CD8-positive, alpha-beta memory T cell (primary cell): ENCODE measurements at regions of chr1 and their contacts with region 1.

Region 1: GRCh38 chr1:39609618-39610331 is 29.7 kb downstream of the HEYL start:
- DNase-seq: peak; percentile 40 to 75 (median 52)
- H3K4me3 ChIP-seq: no peak overlapping the region
- H3K4me3 Mint-ChIP-seq: peak overlapping the region in 1 of 7 donors; percentile 11
- H3K27ac ChIP-seq: no peak overlapping the region
- H3K27ac Mint-ChIP-seq: peak overlapping the region in 1 of 8 donors; percentile 22
- H3K4me1 ChIP-seq: no peaks in the 10 kb centered on the region
- H3K4me1 Mint-ChIP-seq: peaks cover 7 to 16% (median 11%) of the 10 kb centered on the region in 3 donors
- H3K27me3 ChIP-seq: no peaks in the 10 kb centered on the region
- H3K27me3 Mint-ChIP-seq: peaks cover 12 to 17% of the 10 kb centered on the region in 2 donors

Region 2: DNA sequence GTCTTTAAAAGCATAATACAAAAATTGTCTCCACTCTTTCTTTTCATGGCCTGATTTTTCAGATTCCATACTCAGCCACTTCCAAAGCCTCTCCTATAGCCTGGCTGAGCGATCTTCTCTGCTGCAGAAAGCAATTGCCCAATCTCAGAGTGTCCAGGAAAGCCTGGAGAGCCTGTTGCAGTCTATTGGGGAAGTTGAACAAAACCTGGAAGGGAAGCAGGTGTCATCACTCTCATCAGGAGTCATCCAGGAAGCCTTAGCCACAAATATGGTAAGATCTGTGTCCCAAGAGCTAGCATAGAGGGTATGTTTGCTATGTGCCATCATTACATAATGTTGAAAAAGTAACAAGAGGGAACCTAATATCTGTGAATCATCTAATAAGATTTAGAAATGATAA is 249.0 kb before region 1 on chr1:
- CTCF ChIA-PET with region 1: no interaction called
- POLR2A ChIA-PET with region 1: no interaction called
- DNase-seq: no peak
- H3K4me3 ChIP-seq: no peak overlapping the region
- H3K4me3 Mint-ChIP-seq: no peak overlapping the region
- H3K27ac ChIP-seq: no peak overlapping the region
- H3K27ac Mint-ChIP-seq: peak overlapping the region in 5 of 8 donors; percentile 1 to 72 (median 42)
- H3K4me1 ChIP-seq: no peaks in the 10 kb centered on the region
- H3K4me1 Mint-ChIP-seq: peaks cover 0 to 4% (median 0%) of the 10 kb centered on the region in 3 donors
- H3K27me3 ChIP-seq: no peaks in the 10 kb centered on the region
- H3K27me3 Mint-ChIP-seq: no peaks in the 10 kb centered on the region

Region 3: DNA sequence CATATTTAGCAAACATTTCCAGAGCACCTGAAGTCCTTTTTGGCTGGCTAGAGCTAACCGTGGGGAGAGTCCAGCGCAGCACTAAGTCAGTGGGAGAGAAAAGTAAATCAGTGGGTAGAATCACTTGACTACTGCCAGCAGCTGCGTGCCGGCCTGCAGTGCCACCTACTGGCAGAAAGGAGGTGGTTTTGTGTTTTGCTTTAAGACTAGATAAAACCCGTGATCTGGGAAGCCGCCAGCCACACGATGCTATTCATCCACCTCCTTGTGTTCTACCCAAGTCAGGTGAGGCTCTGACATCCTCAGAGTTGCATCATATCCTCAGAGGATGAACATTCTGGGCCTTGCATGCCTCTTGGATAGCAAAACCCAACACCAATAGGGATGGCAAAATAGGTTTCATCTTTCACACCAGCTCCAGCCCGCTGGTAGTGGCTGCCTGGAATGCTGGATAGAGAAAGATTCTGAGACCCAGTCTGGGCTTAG is 43.8 kb after region 1 on chr1:
- CTCF ChIA-PET with region 1: interaction called, 52 read pairs
- POLR2A ChIA-PET with region 1: interaction called, 6 read pairs
- DNase-seq: peak; percentile 52 to 79 (median 61)
- H3K4me3 ChIP-seq: no peak overlapping the region
- H3K4me3 Mint-ChIP-seq: no peak overlapping the region
- H3K27ac ChIP-seq: no peak overlapping the region
- H3K27ac Mint-ChIP-seq: peak overlapping the region in 1 of 8 donors; percentile 25
- H3K4me1 ChIP-seq: no peaks in the 10 kb centered on the region
- H3K4me1 Mint-ChIP-seq: peaks cover 6 to 10% (median 7%) of the 10 kb centered on the region in 3 donors
- H3K27me3 ChIP-seq: peaks cover 6% of the 10 kb centered on the region
- H3K27me3 Mint-ChIP-seq: peaks cover 0 to 9% of the 10 kb centered on the region in 2 donors

Region 4: DNA sequence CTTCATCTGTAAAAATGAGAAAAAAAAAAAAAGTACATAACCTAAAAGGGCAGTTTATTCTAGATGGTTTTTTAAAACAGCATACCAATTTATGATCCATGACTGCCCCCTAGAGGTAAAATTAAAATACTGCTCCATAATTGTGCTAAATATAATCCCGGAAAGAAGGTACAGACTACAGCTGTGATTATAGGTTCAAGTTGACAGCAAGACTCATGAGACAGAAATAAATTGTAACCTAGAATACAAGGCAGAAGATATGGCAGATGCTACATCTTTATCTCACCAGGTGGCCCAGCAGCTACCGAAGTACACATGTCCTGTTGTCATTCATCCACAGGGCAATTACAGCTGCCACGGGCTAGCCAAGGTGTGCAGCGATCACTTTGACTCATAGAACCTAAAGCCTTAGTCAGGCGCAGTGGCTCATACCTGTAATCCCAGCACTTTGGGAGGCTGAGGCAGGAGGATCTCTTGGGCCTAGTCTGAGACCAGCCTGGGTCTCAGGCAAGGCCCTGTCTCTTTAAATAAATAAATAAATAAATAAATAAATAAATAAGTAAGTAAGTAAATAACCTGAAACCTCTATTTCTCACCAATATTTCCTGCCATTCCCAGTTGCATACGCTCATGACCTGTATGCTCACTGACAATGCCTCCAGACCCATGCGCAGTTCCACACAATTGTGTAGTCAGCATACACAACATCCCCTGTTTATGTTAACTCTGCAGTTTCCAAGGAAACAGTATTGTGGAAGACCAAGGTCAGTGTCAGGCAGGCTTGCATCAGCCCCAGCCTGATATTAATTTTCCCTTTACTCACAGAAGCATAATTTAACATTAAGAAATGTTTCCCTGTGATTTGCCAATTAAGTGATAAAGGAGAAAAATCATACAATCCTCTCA is 110.6 kb after region 1 on chr1:
- CTCF ChIA-PET with region 1: interaction called, 12 read pairs
- POLR2A ChIA-PET with region 1: no interaction called
- DNase-seq: peak in 2 of 5 donors; percentile 54 to 68
- H3K4me3 ChIP-seq: no peak overlapping the region
- H3K4me3 Mint-ChIP-seq: no peak overlapping the region
- H3K27ac ChIP-seq: no peak overlapping the region
- H3K27ac Mint-ChIP-seq: no peak overlapping the region
- H3K4me1 ChIP-seq: no peaks in the 10 kb centered on the region
- H3K4me1 Mint-ChIP-seq: no peaks in the 10 kb centered on the region
- H3K27me3 ChIP-seq: peaks cover 16% of the 10 kb centered on the region
- H3K27me3 Mint-ChIP-seq: peaks cover 15 to 39% of the 10 kb centered on the region in 2 donors